MCF 10A (cell line): ENCODE measurements at regions of chr19 and their contacts with region 1.

Region 1: DNA sequence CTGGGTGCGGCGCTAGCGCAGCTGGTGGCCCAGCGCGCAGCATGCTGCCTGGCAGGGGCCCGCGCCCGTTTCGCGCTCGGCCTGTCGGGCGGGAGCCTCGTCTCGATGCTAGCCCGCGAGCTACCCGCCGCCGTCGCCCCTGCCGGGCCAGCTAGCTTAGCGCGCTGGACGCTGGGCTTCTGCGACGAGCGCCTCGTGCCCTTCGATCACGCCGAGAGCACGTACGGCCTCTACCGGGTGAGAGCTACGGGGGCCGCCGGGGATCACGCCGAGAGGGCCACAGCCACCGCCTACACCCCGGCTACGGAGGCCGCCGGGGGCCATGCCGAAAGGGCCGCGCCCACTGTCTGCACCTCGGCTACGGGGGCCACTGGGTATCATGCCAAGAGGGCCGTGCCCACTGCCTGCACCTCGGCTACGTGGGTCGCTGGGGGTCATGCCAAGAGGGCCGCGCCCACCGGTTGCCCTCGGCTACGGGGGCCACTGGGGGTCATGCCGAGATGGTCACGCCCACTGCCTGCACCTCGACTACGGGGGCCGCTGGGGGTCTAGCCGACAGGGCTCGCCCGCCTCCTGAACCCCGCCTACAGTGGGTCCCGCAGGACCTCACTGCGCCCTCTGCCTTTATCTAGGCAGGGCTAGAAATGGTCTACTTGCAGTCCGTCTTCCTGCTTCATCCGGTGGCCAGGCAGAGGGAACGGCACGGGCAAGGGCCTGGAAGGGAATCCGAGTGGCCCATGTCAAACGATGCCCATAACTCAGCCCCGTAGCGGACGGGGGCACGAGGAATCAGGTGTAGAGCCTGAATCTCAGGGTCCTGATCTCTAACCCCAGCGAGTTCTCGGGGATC is 500 bp downstream of the PGLS start:
- DNase-seq: peak; percentile 79
- H3K4me3 Mint-ChIP-seq: peak overlapping the region; percentile 98
- H3K27ac Mint-ChIP-seq: peak overlapping the region; percentile 99
- H3K4me1 Mint-ChIP-seq: peaks cover 22% of the 10 kb centered on the region
- H3K27me3 Mint-ChIP-seq: no peaks in the 10 kb centered on the region
- CTCF ChIP-seq: no peak

Region 2: GRCh38 chr19:17419621-17420466 is 92.1 kb before region 1 on chr19 and contains the start of gene MVB12A:
- CTCF ChIA-PET with region 1: no interaction called
- POLR2A ChIA-PET with region 1: interaction called, 15 read pairs
- intact Hi-C with region 1: no loop called
- DNase-seq: peak; percentile 98
- H3K4me3 Mint-ChIP-seq: peak within 1 kb of the TSS; percentile 88
- H3K27ac Mint-ChIP-seq: peak within 1 kb of the TSS; percentile 95
- H3K4me1 Mint-ChIP-seq: peaks cover 16% of the 10 kb centered on the region
- H3K27me3 Mint-ChIP-seq: no peaks in the 10 kb centered on the region
- CTCF ChIP-seq: no peak
- total RNA-seq, gene MVB12A: 47.7 and 51.1 TPM in 2 replicates

Region 3: GRCh38 chr19:17496337-17496997 is 15.5 kb before region 1 on chr19:
- CTCF ChIA-PET with region 1: interaction called, 16 read pairs
- POLR2A ChIA-PET with region 1: interaction called, 13 read pairs
- intact Hi-C with region 1: no loop called
- DNase-seq: peak; percentile 86
- H3K4me3 Mint-ChIP-seq: no peak overlapping the region
- H3K27ac Mint-ChIP-seq: no peak overlapping the region
- H3K4me1 Mint-ChIP-seq: peaks cover 15% of the 10 kb centered on the region
- H3K27me3 Mint-ChIP-seq: no peaks in the 10 kb centered on the region
- CTCF ChIP-seq: peak; percentile 90

Region 4: DNA sequence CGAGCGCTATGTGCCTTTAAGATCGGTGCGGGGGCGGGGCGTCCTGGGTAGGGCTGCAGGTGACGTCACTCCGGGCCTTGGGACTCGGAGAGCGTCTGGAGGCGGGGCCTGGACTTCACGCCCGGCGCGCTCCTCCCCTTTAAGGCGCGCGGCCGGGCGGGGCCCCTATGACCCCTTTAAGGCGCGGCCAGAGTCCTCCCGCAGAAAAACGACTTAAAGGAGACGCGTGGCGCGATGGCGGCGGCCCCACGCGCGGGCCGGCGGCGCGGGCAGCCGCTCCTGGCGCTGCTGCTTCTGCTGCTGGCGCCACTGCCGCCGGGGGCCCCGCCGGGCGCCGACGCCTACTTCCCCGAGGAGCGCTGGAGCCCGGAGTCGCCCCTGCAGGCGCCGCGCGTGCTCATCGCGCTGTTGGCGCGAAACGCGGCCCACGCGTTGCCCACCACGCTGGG is 43.6 kb after region 1 on chr19 and contains the start of gene COLGALT1:
- CTCF ChIA-PET with region 1: interaction called, 6 read pairs
- POLR2A ChIA-PET with region 1: interaction called, 25 read pairs
- intact Hi-C with region 1: loop called (anchors 2 kb)
- DNase-seq: peak; percentile 99
- H3K4me3 Mint-ChIP-seq: peak within 1 kb of the TSS; percentile 86
- H3K27ac Mint-ChIP-seq: peak within 1 kb of the TSS; percentile 67
- H3K4me1 Mint-ChIP-seq: peaks cover 20% of the 10 kb centered on the region
- H3K27me3 Mint-ChIP-seq: no peaks in the 10 kb centered on the region
- CTCF ChIP-seq: no peak
- total RNA-seq, gene COLGALT1: 103 and 107 TPM in 2 replicates

Region 5: DNA sequence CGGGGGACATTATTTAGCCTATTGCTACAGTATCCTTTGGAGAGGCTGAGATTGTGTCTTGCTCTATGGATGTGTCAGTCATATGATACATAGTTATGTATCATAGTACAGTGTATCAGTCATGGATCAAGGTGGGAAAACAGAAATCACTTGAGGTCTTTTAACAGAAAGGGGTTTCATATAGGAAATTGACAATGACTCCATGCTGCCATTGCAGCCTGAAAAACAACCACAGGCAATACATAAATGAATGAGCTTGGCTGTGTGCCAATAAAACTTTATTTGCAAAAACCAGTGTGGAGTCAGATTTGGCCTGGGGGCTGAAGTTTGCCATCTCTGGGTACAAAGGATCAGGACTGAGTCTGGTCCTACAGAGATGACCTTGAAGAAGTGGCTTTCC is 78.9 kb after region 1 on chr19:
- CTCF ChIA-PET with region 1: no interaction called
- POLR2A ChIA-PET with region 1: no interaction called
- intact Hi-C with region 1: no loop called
- DNase-seq: no peak
- H3K4me3 Mint-ChIP-seq: no peak overlapping the region
- H3K27ac Mint-ChIP-seq: no peak overlapping the region
- H3K4me1 Mint-ChIP-seq: no peaks in the 10 kb centered on the region
- H3K27me3 Mint-ChIP-seq: peaks cover 11% of the 10 kb centered on the region
- CTCF ChIP-seq: no peak